Activated T-helper 1 cell treated with anti-CD3 and anti-CD28 coated beads, Interleukin-12 subunit alpha, Interleukin-12 subunit beta, Interleukin-2, Interleukin-4 antibody, amounts not matched to agents 30 ng/mL and 10 ng/mL and 1 ng/mL, durations not matched to agents 14 hours and 24 hours and 36 hours (primary cell): ENCODE measurements at regions of chr16 and their contacts with region 1.

Region 1: GRCh38 chr16:27245276-27246172 is 23.0 kb downstream of the NSMCE1 start:
- DNase-seq: no peak
- H3K4me3 Mint-ChIP-seq: peak overlapping the region; percentile 61
- H3K27ac Mint-ChIP-seq: peak overlapping the region; percentile 92
- H3K4me1 Mint-ChIP-seq: peaks cover 88% of the 10 kb centered on the region
- H3K27me3 Mint-ChIP-seq: no peaks in the 10 kb centered on the region

Region 2: GRCh38 chr16:27273670-27274423 is 28.3 kb after region 1 on chr16:
- intact Hi-C with region 1: loop called (anchors 1 kb)
- DNase-seq: no peak
- H3K4me3 Mint-ChIP-seq: peak overlapping the region; percentile 32
- H3K27ac Mint-ChIP-seq: peak overlapping the region; percentile 87
- H3K4me1 Mint-ChIP-seq: peaks cover 65% of the 10 kb centered on the region
- H3K27me3 Mint-ChIP-seq: no peaks in the 10 kb centered on the region